Heart left ventricle (tissue), 16 donors: ENCODE measurements at regions of chr3 and their contacts with region 1.

Region 1: GRCh38 chr3:53236112-53236841 is 19.5 kb downstream of the TKT start:
- DNase-seq: peak; percentile 65 to 89 (median 84)
- ATAC-seq: peak; percentile 67 to 92 (median 84)
- H3K4me3 ChIP-seq: no peak overlapping the region
- H3K27ac ChIP-seq: peak overlapping the region; percentile 21 to 86 (median 64)
- H3K4me1 ChIP-seq: peaks cover 0 to 54% (median 13%) of the 10 kb centered on the region in 12 donors
- H3K27me3 ChIP-seq: no peaks in the 10 kb centered on the region
- CTCF ChIP-seq: no peak
- POLR2A ChIP-seq: no peak

Region 2: GRCh38 chr3:53269888-53270880 is 33.9 kb after region 1 on chr3:
- intact Hi-C with region 1: loop called in 1 of 10 experiments (anchors 5 kb)
- DNase-seq: peak; percentile 83 to 92 (median 85)
- ATAC-seq: peak; percentile 95 to 97 (median 95)
- H3K4me3 ChIP-seq: peak overlapping the region in 4 of 12 donors; percentile 8 to 40 (median 26)
- H3K27ac ChIP-seq: peak overlapping the region; percentile 74 to 95 (median 86)
- H3K4me1 ChIP-seq: peaks cover 0 to 37% (median 12%) of the 10 kb centered on the region in 12 donors
- H3K27me3 ChIP-seq: no peaks in the 10 kb centered on the region
- CTCF ChIP-seq: peak in 2 of 12 donors; percentile 17
- POLR2A ChIP-seq: peak in 1 of 2 donors; percentile 34